Caco-2 (cell line): ENCODE measurements at regions of chr12 and their contacts with region 1.

Region 1: DNA sequence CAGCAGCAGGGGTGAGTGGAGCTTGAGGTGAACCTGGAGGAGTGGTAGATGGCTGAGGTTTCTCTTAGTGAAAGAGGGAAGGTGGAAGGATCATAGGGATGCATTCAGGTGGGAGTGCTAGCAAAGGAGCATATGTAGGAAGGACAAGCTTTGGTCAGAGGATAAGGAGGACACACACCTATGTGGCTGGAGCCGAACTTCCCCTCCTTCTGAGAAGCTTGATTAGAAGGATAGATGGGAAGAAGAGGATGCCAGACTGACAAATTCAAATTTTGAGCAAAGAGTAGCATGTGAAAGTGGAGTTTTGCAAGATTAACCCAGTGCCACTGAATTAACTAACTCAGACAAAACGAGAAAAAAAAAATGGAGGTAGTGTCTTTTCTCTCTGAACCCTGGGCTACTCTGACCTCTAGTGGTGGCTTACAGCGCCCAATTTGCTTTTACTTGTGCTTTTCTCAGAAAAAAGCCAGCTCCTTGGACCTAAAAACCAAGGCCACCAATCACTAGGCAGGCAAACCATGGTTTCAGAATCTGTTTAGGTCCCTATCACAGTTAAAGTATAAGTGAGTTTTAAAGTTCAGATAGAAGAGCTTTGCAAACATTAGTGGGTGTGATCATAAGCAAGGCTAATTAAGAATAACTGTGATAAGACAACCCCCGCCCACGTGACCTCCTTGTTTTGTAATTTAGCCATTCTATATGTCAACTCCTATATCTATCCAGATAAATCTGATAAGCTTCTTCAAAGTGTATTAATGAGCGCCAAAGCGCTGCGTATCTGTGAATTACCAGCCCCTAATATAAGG is 15.5 kb downstream of the EMP1 start:
- DNase-seq: peak; percentile 83 to 87
- H3K4me3 ChIP-seq: no peak overlapping the region
- H3K4me3 Mint-ChIP-seq: peak overlapping the region; percentile 17
- H3K27ac Mint-ChIP-seq: peak overlapping the region; percentile 59
- H3K4me1 ChIP-seq: peaks cover 21% of the 10 kb centered on the region
- H3K4me1 Mint-ChIP-seq: peaks cover 17% of the 10 kb centered on the region
- H3K27me3 ChIP-seq: no peaks in the 10 kb centered on the region
- H3K27me3 Mint-ChIP-seq: no peaks in the 10 kb centered on the region
- CTCF ChIP-seq: peak; percentile 91 to 97

Region 2: GRCh38 chr12:12365931-12366431 is 846.1 kb before region 1 on chr12:
- CTCF ChIA-PET with region 1: no interaction called
- POLR2A ChIA-PET with region 1: no interaction called
- intact Hi-C with region 1: no loop called
- DNase-seq: no peak
- H3K4me3 ChIP-seq: no peak overlapping the region
- H3K4me3 Mint-ChIP-seq: no peak overlapping the region
- H3K27ac Mint-ChIP-seq: no peak overlapping the region
- H3K4me1 ChIP-seq: peaks cover 3% of the 10 kb centered on the region; the same call in 1 of the 2 replicates
- H3K4me1 Mint-ChIP-seq: peaks cover 15% of the 10 kb centered on the region
- H3K27me3 ChIP-seq: no peaks in the 10 kb centered on the region
- H3K27me3 Mint-ChIP-seq: no peaks in the 10 kb centered on the region
- CTCF ChIP-seq: no peak

Region 3: DNA sequence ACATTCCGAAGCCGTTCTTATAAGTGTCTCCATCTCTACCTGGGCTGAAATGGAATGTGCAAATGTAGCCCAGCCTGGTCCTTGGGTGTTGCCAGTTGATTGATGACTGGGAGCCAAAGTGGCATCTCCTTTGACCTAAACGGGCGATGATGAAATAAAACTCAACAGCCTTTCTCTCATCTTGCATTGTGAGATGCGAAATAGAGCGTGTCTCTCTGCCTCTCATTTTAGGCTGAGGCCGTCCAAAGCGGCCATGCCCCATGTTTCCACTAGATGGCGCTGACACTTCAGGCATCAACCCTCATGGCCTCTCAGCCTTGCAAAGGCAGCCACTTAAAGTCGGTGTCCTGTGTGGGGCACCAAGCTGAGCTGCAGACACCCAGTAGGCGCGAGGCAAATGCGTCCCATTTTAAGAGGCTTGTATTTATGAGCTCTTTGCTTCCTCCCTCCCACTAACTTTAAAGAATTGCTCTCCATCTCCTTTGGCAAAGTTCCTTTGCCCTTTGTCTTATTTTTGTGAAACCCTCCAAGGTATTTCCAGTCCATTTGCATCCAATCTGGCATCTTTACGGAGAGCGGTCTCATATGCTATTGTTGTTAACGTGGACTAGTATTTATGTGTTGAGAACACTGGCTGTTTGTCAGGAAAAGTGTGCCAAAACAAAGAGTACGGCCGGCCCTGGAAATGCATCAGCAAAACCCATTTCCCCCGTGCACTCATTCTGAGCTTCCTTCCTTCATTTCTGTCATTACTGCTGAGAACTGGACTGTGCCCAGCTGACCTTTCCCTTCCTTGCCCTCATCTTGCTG is 295.7 kb before region 1 on chr12:
- CTCF ChIA-PET with region 1: interaction called, 9 read pairs
- POLR2A ChIA-PET with region 1: no interaction called
- intact Hi-C with region 1: loop called (anchors 1 kb)
- DNase-seq: peak; percentile 87 to 92
- H3K4me3 ChIP-seq: no peak overlapping the region
- H3K4me3 Mint-ChIP-seq: no peak overlapping the region
- H3K27ac Mint-ChIP-seq: no peak overlapping the region
- H3K4me1 ChIP-seq: peaks cover 7% of the 10 kb centered on the region
- H3K4me1 Mint-ChIP-seq: peaks cover 24% of the 10 kb centered on the region
- H3K27me3 ChIP-seq: no peaks in the 10 kb centered on the region
- H3K27me3 Mint-ChIP-seq: no peaks in the 10 kb centered on the region
- CTCF ChIP-seq: peak; percentile 98 to 99

Region 4: DNA sequence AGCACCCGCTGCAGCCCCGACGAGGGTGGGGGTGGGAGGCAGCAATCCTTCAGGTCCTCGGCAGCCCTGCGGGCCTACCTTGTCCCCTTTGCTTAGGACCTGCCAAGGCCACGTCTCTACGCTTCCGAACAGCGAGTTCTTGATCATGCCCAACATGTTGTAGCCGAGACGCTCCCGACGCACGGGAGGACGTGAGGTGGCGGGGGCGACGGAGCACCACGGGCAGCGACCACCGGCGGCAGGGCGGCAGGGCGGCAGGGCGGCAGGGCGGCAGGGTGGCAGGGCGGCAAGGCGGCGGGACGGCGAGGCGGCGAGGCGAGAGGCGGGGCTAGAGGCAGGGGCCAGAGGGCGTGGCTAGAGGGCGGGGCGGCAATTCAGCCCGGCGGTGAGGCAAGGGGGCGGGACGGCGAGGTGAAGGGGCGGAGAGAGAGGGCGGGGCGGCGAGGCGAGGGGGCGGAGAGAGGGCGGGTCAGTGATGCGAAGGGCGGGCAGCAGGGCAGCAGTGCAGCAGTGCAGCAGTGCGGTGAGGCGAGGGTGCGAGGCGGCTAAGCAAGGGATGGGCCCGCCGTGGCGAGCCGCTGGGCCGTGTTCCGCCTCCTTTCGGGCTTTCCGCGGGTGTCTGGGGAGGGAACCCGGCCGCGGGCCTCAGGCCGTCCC is 212.0 kb before region 1 on chr12 and contains the start of gene HEBP1:
- CTCF ChIA-PET with region 1: interaction called, 4 read pairs
- POLR2A ChIA-PET with region 1: no interaction called
- intact Hi-C with region 1: loop called (anchors 1 kb)
- DNase-seq: peak; percentile 97 to 99
- H3K4me3 ChIP-seq: peak within 1 kb of the TSS; percentile 85
- H3K4me3 Mint-ChIP-seq: peak within 1 kb of the TSS; percentile 88
- H3K27ac Mint-ChIP-seq: peak within 1 kb of the TSS; percentile 94
- H3K4me1 ChIP-seq: peaks cover 25% of the 10 kb centered on the region
- H3K4me1 Mint-ChIP-seq: peaks cover 25% of the 10 kb centered on the region
- H3K27me3 ChIP-seq: no peaks in the 10 kb centered on the region
- H3K27me3 Mint-ChIP-seq: no peaks in the 10 kb centered on the region
- CTCF ChIP-seq: no peak
- total RNA-seq, gene HEBP1: 55.2 and 55.8 TPM in 2 replicates

Region 5: DNA sequence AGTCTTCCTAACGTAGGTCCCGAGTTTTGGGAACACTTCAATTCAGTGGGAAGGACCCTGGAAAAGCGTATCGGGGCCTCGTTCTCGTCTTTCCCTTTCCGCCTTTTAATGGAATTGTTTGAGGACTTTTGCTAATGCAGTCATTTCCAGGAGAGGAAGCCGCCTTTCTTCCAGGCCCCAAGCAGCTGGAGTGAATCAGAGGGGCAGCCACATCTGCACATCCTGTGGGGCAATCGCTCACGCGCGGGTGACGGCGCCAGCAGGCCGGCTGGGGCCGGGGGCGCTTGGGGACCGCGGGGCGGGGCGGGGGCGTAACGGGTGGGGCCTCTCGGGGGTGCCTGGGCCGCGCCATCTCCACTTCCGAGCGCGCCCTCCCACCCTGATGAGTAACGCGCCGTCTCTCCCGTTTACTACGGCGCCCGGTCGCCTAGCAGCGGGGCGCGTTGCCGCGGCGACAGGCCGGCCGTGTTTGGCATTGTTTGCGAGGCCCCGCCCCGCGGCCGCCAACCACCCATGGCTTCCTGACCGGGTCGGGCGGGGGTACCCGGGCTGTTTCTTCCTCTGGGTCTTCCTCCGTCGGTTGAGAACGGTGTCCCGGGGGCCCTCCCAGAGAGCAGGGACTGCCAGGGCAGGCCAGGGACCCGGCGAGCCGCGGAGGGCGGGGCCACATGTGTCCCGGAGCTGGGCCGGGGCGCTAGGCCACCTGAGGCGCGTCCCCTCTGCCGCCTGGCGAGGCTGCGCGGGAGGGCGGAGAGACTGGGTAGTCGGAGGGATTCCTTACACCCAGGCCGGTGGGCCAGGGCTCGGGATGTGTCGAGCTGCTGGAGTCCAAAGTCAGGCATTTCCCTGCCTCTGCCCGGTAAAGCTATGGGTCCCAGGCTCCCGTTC is 110.9 kb before region 1 on chr12:
- CTCF ChIA-PET with region 1: interaction called, 68 read pairs
- POLR2A ChIA-PET with region 1: interaction called, 4 read pairs
- intact Hi-C with region 1: loop called (anchors 1 kb)
- DNase-seq: peak; percentile 89 to 96
- H3K4me3 ChIP-seq: peak overlapping the region; percentile 79
- H3K4me3 Mint-ChIP-seq: peak overlapping the region; percentile 75
- H3K27ac Mint-ChIP-seq: peak overlapping the region; percentile 81
- H3K4me1 ChIP-seq: peaks cover 44% of the 10 kb centered on the region
- H3K4me1 Mint-ChIP-seq: peaks cover 47% of the 10 kb centered on the region
- H3K27me3 ChIP-seq: no peaks in the 10 kb centered on the region
- H3K27me3 Mint-ChIP-seq: no peaks in the 10 kb centered on the region
- CTCF ChIP-seq: no peak

Region 6: DNA sequence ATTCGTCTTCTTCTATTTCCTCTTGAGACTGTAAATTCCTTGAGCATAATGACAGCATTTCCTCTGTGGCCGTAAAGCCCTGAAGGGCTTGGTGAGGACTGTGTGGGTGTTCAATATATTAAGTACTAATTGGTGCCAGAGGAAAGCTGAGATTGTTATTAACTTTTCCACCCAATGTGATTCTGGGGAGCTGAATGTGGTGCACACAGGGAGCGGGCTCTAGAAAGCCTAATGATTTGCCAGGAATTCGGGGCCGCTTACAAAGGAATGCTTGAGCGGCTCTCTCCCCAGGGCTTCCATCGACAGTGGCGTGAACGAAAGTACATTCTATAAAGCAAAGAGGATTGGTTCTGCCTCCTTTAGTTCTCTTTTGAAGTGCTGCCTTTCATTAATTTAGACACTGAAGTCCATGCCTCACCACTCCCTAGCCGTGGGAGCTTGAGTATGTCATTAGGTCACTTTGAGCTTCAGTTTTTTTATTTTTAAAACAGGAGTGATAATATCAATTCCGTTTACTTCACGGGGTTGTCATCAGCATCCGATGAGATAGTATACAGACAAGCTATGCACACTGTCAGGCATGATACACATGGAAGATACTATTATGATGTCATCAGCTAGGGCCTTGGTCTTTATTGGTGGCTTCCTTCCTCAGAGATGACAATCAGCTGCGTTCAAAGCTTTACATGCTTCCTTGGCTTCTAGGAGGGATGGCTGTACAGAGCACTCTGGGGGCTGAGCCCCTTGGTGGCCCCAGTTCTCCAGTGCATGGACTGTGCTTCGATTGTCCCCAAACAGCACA is 97.6 kb before region 1 on chr12:
- CTCF ChIA-PET with region 1: no interaction called
- POLR2A ChIA-PET with region 1: no interaction called
- intact Hi-C with region 1: no loop called
- DNase-seq: no peak
- H3K4me3 ChIP-seq: no peak overlapping the region
- H3K4me3 Mint-ChIP-seq: no peak overlapping the region
- H3K27ac Mint-ChIP-seq: no peak overlapping the region
- H3K4me1 ChIP-seq: no peaks in the 10 kb centered on the region; the same call in 1 of the 2 replicates
- H3K4me1 Mint-ChIP-seq: peaks cover 13% of the 10 kb centered on the region
- H3K27me3 ChIP-seq: no peaks in the 10 kb centered on the region
- H3K27me3 Mint-ChIP-seq: no peaks in the 10 kb centered on the region
- CTCF ChIP-seq: no peak

Region 7: DNA sequence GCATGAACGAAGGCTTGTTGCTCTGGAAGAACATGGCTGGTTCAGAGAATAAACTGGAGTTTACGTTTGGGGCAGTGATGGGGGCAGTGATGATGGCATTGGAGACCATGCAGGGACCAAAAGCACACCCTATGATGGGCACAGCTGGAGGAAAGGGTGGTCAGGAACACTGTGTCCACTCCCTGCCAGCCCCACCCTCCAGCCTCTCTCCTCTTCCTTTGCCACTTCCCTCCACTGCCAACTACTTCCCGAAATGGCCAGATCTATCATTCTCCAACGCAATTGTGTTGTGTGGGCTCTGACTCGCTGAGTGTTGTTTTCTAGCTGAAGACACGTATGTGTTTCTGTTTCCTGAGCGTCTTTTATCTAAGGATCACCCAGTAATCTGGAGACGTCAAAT is 69.3 kb before region 1 on chr12:
- CTCF ChIA-PET with region 1: no interaction called
- POLR2A ChIA-PET with region 1: no interaction called
- intact Hi-C with region 1: no loop called
- DNase-seq: no peak
- H3K4me3 ChIP-seq: no peak overlapping the region
- H3K4me3 Mint-ChIP-seq: no peak overlapping the region
- H3K27ac Mint-ChIP-seq: no peak overlapping the region
- H3K4me1 ChIP-seq: peaks cover 30% of the 10 kb centered on the region
- H3K4me1 Mint-ChIP-seq: peaks cover 45% of the 10 kb centered on the region
- H3K27me3 ChIP-seq: no peaks in the 10 kb centered on the region
- H3K27me3 Mint-ChIP-seq: no peaks in the 10 kb centered on the region
- CTCF ChIP-seq: no peak

Region 8: GRCh38 chr12:13196130-13196921 is 15.7 kb before region 1 on chr12 and contains the start of gene EMP1:
- CTCF ChIA-PET with region 1: interaction called, 14 read pairs
- POLR2A ChIA-PET with region 1: no interaction called
- intact Hi-C with region 1: no loop called
- DNase-seq: peak; percentile 67 to 83
- H3K4me3 ChIP-seq: no peak within 1 kb of the TSS
- H3K4me3 Mint-ChIP-seq: peak within 1 kb of the TSS; percentile 50
- H3K27ac Mint-ChIP-seq: peak within 1 kb of the TSS; percentile 28
- H3K4me1 ChIP-seq: peaks cover 47% of the 10 kb centered on the region
- H3K4me1 Mint-ChIP-seq: peaks cover 43% of the 10 kb centered on the region
- H3K27me3 ChIP-seq: no peaks in the 10 kb centered on the region
- H3K27me3 Mint-ChIP-seq: no peaks in the 10 kb centered on the region
- CTCF ChIP-seq: no peak
- total RNA-seq, gene EMP1: 6.6 and 10.2 TPM in 2 replicates

Region 9: DNA sequence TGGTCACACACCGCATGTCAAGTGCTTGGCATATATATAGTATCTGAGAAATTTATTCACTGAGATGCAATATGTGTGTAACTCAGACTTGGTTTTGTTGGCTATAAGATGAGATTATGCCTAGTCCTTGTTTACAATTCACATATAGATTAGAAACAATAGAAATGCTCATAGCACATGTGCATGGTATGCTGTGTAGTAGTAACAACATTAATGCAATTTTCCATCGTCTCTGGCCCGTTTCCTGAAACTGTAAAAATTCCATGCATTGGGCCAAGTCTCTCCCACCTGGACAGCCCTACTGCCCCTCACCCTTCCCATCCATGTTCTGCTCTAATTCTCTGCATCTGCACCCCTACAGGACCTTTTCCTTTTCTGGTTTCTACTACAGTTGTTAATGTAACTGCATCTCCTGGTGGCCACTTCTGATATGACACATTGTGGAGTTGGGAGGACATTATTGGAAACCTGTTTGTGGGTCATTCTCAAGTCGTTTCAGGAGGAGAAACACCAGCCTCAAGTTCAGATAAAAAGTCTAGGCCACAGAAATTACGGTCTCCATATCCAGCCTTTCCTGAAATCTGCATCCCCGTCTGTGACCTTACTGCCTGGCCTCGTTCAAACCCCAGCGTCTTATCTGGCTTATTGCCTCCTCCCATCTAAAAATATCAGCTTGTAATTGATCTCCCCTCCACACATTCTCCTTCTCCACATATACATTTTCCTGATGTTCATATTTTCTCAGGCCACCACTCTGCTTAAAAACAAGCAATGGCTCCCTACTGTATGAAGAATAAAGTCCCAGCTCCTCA is 22.0 kb after region 1 on chr12:
- CTCF ChIA-PET with region 1: interaction called, 5 read pairs
- POLR2A ChIA-PET with region 1: interaction called, 5 read pairs
- intact Hi-C with region 1: loop called (anchors 1 kb)
- DNase-seq: peak; percentile 58 to 75
- H3K4me3 ChIP-seq: no peak overlapping the region
- H3K4me3 Mint-ChIP-seq: no peak overlapping the region
- H3K27ac Mint-ChIP-seq: no peak overlapping the region
- H3K4me1 ChIP-seq: no peaks in the 10 kb centered on the region
- H3K4me1 Mint-ChIP-seq: peaks cover 13% of the 10 kb centered on the region
- H3K27me3 ChIP-seq: no peaks in the 10 kb centered on the region
- H3K27me3 Mint-ChIP-seq: peaks cover 4% of the 10 kb centered on the region
- CTCF ChIP-seq: peak; percentile 95 to 96